H1 (cell line): ENCODE measurements at regions of chr2 and their contacts with region 1.

Region 1: DNA sequence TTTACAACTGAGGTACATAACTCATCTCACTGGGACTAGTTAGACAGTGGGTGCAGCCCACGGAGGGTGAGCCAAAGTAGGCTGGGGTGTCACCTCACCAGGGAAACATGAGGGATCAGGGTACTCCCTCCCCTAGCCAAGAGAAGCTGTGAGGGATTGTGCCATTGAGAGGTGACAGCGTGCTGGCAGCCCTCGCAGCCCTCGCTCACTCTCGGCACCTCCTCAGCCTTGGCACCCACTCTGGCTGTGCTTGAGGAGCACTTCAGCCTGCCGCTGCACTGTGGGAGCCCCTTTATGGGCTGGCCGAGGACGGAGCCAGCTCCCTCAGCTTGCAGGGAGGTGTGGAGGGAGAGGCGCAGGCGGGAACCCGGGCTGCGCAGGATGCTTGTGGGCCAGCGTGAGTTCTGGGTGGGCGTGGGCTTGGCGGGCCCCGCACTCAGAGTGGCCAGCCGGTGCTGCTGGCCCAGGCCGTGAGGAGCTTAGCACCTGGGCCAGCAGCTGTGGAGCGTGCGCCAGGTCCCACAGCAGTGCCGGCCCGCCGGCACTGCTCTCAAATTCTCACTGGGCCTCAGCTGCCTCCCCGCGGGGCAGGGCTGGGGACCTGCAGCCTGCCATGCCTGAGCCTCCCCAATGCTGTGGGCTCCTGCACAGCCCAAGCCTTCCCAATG is 44.5 kb upstream of the FAM110C start:
- DNase-seq: no peak
- H3K4me3 ChIP-seq: no peak overlapping the region
- H3K27ac ChIP-seq: no peak overlapping the region
- H3K4me1 ChIP-seq: peaks cover 0 to 5% (median 0%) of the 10 kb centered on the region in 4 experiments; a peak in 2 of 7 replicates
- H3K27me3 ChIP-seq: no peaks in the 10 kb centered on the region
- CTCF ChIP-seq: no peak
- EP300 ChIP-seq: no peak
- POLR2A ChIP-seq: no peak
- RAD21 ChIP-seq: no peak

Region 2: DNA sequence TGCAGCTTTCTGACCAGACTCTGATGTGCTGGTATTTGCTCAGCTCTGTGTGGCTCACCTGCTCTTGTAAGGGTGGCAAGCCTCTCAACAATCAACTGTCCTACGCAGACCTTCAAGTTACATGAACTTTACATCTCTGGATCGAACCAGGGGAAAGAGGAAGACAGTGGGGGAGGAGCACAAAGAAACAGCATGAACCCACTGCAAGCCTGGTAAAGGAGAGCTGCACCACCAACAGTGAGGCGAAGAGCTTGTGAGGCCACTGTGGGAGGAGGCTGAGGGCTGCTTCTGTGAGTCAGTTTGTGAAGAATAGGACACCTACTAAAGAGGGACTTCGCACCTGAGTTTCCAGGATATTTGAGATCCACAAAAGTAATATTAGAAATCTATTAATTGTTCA is 25.7 kb before region 1 on chr2:
- CTCF ChIA-PET with region 1: interaction called, 10 read pairs
- POLR2A ChIA-PET with region 1: no interaction called
- DNase-seq: no peak
- H3K4me3 ChIP-seq: no peak overlapping the region
- H3K27ac ChIP-seq: no peak overlapping the region
- H3K4me1 ChIP-seq: peaks cover 0 to 12% (median 5%) of the 10 kb centered on the region in 4 experiments; a peak in 5 of 7 replicates
- H3K27me3 ChIP-seq: no peaks in the 10 kb centered on the region
- CTCF ChIP-seq: no peak
- EP300 ChIP-seq: no peak
- POLR2A ChIP-seq: no peak
- RAD21 ChIP-seq: peak; percentile 12; a peak in 2 of 4 replicates